Lower leg skin (tissue), 4 donors: ENCODE measurements at regions of chr9 and their contacts with region 1.

Region 1: GRCh38 chr9:121852651-121853616 is 201.5 kb downstream of the DAB2IP start:
- DNase-seq: peak; percentile 70 to 90
- H3K4me3 ChIP-seq: no peak overlapping the region
- CTCF ChIP-seq: no peak
- POLR2A ChIP-seq: no peak

Region 2: GRCh38 chr9:119938871-119939270 is 1914.1 kb before region 1 on chr9:
- intact Hi-C with region 1: loop called (anchors 5 kb)
- DNase-seq: no peak
- H3K4me3 ChIP-seq: no peak overlapping the region
- CTCF ChIP-seq: no peak
- POLR2A ChIP-seq: no peak

Region 3: DNA sequence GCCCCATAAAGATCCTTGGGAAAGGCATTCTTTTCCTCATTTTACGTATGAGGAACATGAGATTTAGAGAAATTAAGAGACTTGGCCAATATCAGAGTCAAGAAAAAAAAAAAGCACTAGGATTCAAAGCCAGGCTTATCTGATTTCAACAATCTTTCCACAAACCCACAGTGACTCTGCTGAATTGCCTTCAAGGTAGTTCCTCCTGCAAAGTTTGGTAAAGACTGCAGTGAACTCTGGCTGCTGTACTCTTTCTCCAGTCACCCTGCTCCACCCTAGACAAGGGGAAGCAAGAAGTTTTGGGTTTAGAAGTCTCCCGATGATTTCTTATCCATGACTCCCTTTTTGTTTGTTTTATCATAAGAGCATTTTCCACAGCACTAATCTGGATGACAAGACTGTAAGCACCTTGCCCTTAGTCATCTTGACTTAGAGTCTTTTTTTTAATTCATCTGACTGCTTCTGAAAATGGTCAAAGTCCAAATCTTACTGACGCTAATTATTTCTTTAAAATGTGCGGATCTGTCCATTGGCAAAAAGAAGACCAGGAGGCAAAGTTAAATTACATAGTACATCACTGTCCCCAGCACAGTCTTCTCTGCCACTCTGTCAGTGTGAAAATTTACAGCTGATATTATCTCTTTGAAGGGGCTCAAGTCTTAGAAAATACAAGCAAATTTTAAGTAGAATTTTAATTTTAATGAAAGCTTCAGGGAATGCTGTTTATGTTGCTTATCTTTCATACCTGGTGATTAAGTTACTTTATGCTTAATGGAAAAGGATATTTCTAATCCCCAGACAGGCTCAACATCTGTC is 60.1 kb after region 1 on chr9:
- intact Hi-C with region 1: no loop called
- DNase-seq: no peak
- H3K4me3 ChIP-seq: no peak overlapping the region
- CTCF ChIP-seq: no peak
- POLR2A ChIP-seq: no peak